ENCODE measurements at regions of chr1 and their contacts with region 1.

Region 1: GRCh38 chr1:33295450-33296081 is 25.3 kb downstream of the A3GALT2 start:
- DNase-seq: peak; percentile 83 to 90
- ATAC-seq: peak; percentile 84 to 93 (median 90)
- H3K4me3 ChIP-seq: no peak overlapping the region
- H3K27ac ChIP-seq: no peak overlapping the region
- H3K4me1 ChIP-seq: no peaks in the 10 kb centered on the region
- H3K27me3 ChIP-seq: no peaks in the 10 kb centered on the region
- CTCF ChIP-seq: peak; percentile 97

Region 2: DNA sequence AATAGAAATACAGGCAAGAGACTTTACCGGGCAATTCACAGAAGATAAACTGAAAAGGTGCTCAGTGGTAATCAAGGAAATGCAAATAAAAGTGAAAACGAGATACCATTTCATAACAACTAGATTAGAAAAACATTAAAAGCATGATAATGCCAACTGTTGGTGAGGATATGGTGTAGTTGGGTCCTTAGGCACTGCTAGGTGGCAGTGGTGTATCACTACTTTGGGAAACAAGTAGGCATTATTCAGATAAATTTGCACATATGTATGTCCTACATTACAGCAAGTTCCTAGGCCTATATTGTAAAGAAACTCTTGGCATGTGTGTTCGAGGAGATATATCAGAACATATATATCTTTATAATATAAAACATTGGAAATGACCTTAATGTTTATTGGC is 183.6 kb before region 1 on chr1:
- intact Hi-C with region 1: loop called in 1 of 2 experiments (anchors 5 kb)
- DNase-seq: no peak
- ATAC-seq: no peak
- H3K4me3 ChIP-seq: no peak overlapping the region
- H3K27ac ChIP-seq: no peak overlapping the region
- H3K4me1 ChIP-seq: no peaks in the 10 kb centered on the region
- H3K27me3 ChIP-seq: no peaks in the 10 kb centered on the region
- CTCF ChIP-seq: peak; percentile 28

Region 3: DNA sequence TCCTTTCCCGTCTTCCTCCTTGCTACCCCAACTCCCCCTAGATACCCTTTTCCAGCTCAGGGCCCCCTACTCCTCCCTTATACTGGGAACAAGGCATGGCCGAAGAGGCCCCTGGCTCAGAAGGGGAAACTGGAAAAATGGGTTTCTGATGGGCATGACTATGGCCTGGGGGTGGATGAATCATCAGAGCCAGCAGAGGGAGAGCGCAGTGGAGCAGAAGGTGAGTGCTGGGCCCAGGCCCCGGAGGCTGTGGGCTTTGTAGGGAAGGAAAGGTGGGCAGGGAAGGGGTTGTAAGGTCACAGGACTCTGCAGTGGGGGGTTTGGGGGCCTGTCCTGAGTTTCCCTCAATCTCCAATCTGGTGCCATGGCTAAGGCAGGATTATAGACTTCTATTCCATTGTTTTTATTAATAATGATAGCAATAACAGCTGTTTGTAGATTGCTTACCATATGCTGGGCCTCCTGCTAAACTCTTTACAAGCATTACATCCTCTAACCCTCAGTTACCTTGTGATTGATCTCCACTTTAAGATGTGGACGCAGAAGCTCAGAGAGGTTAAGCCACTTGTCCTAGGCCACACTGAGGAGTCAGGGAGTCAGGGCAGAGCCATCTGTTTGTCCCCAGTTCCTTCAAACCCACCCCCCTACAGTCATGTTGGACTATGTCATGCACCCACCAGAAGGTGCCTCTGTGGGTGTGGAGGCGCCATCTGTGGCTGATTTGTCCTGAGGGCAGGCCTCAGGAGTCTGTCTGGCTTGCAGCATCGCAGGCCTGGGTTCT is 75.5 kb before region 1 on chr1:
- intact Hi-C with region 1: loop called in 1 of 2 experiments (anchors 2 kb)
- DNase-seq: no peak
- ATAC-seq: no peak
- H3K4me3 ChIP-seq: no peak overlapping the region
- H3K27ac ChIP-seq: no peak overlapping the region
- H3K4me1 ChIP-seq: no peaks in the 10 kb centered on the region
- H3K27me3 ChIP-seq: no peaks in the 10 kb centered on the region
- CTCF ChIP-seq: no peak

Region 4: DNA sequence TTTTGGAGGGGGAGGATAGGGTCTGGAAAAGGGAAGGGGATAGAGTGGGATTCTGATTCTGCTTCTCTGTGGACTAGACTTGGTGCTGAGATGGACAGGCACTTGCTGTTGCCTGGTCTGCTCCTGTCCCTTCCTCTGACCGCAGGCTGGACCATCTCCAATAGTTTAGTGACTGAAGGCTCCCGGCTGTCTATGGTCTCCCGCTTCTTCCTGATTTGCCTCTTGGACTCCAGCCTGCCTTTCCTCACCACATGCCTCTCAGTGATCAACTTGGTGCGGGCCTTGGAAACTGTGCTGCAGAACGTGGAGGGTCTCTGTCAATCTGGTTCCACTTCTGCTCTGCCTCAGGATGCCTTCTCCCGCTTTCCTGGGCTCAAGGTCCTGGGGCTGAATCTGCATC is 170.6 kb after region 1 on chr1:
- intact Hi-C with region 1: loop called (anchors 1 to 2 kb)
- DNase-seq: no peak
- ATAC-seq: peak in 3 of 4 donors; percentile 52 to 76 (median 63)
- H3K4me3 ChIP-seq: no peak overlapping the region
- H3K27ac ChIP-seq: no peak overlapping the region
- H3K4me1 ChIP-seq: peaks cover 21% of the 10 kb centered on the region
- H3K27me3 ChIP-seq: no peaks in the 10 kb centered on the region
- CTCF ChIP-seq: no peak

Region 5: GRCh38 chr1:33606272-33606671 is 310.7 kb after region 1 on chr1:
- intact Hi-C with region 1: loop called in 1 of 2 experiments (anchors 5 kb)
- DNase-seq: peak in 1 of 2 donors; percentile 26
- ATAC-seq: peak in 1 of 4 donors; percentile 43
- H3K4me3 ChIP-seq: no peak overlapping the region
- H3K27ac ChIP-seq: no peak overlapping the region
- H3K4me1 ChIP-seq: no peaks in the 10 kb centered on the region
- H3K27me3 ChIP-seq: no peaks in the 10 kb centered on the region
- CTCF ChIP-seq: no peak

Measured in psoas muscle (tissue), 8 donors.